Sigmoid colon (tissue), 7 donors: ENCODE measurements at regions of chrX and their contacts with region 1.

Region 1: GRCh38 chrX:129606918-129607317 is 47.8 kb downstream of the APLN start:
- DNase-seq: peak; percentile 72
- H3K4me3 ChIP-seq: no peak overlapping the region
- H3K27ac ChIP-seq: no peak overlapping the region
- H3K4me1 ChIP-seq: peaks cover 0 to 10% (median 2%) of the 10 kb centered on the region in 4 donors
- H3K27me3 ChIP-seq: no peaks in the 10 kb centered on the region
- CTCF ChIP-seq: peak; percentile 57 to 76 (median 70)
- EP300 ChIP-seq: no peak
- POLR2A ChIP-seq: no peak

Region 2: DNA sequence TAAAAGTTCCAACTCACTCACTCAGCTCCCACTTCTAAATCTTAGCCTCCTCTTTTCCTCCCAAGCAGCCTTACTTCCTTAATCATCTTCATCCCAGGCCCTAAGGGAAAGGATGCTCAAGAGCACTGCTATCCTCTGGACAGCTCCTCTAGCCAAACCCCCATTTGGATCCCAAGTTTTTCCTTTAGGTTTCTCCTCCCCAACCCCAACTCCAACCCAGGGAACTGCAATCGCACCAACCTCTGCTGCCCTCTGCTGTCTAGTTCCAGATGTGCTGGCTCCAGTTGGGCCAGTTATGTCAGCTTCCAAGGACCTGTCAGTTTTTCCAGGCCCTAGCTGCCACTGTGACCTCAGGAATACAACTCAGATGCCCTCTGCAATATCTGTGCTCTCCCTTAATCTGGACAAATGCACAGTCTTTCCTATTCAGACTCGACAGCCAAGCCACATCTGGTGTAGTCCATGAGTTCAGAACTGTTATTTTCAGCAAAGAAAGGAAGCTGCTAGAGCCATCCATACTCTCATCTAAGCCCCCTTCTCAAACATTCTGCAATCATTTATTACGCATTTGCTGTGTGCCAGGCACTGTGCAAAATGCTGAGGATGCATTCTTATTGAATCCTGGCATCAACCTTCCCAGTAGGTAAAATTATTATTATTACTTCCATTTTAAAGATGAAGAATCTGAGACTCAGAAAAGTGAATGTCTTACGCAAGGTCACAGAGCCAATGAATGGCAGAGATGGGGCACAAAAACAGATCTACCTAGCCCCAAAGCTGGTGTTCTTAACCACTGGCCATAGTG is 119.6 kb after region 1 on chrX:
- intact Hi-C with region 1: loop called (anchors 1 kb)
- DNase-seq: peak; percentile 74
- H3K4me3 ChIP-seq: no peak overlapping the region
- H3K27ac ChIP-seq: no peak overlapping the region
- H3K4me1 ChIP-seq: no peaks in the 10 kb centered on the region
- H3K27me3 ChIP-seq: no peaks in the 10 kb centered on the region
- CTCF ChIP-seq: peak; percentile 57 to 68 (median 62)
- EP300 ChIP-seq: no peak
- POLR2A ChIP-seq: no peak

Region 3: GRCh38 chrX:129772796-129773431 is 166.0 kb after region 1 on chrX:
- intact Hi-C with region 1: no loop called
- DNase-seq: peak; percentile 78
- H3K4me3 ChIP-seq: no peak overlapping the region
- H3K27ac ChIP-seq: no peak overlapping the region
- H3K4me1 ChIP-seq: no peaks in the 10 kb centered on the region
- H3K27me3 ChIP-seq: no peaks in the 10 kb centered on the region
- CTCF ChIP-seq: no peak
- EP300 ChIP-seq: no peak
- POLR2A ChIP-seq: no peak

Region 4: GRCh38 chrX:130060122-130061069 is 453.5 kb after region 1 on chrX:
- intact Hi-C with region 1: loop called (anchors 10 kb)
- DNase-seq: peak; percentile 86
- H3K4me3 ChIP-seq: peak overlapping the region; percentile 30 to 58 (median 54)
- H3K27ac ChIP-seq: peak overlapping the region; percentile 55 to 76 (median 72)
- H3K4me1 ChIP-seq: peaks cover 0 to 21% (median 7%) of the 10 kb centered on the region in 4 donors
- H3K27me3 ChIP-seq: no peaks in the 10 kb centered on the region
- CTCF ChIP-seq: peak; percentile 67 to 88 (median 75)
- EP300 ChIP-seq: no peak
- POLR2A ChIP-seq: no peak

Region 5: GRCh38 chrX:130196466-130196865 is 589.5 kb after region 1 on chrX:
- intact Hi-C with region 1: loop called (anchors 10 kb)
- DNase-seq: no peak
- H3K4me3 ChIP-seq: no peak overlapping the region
- H3K27ac ChIP-seq: no peak overlapping the region
- H3K4me1 ChIP-seq: no peaks in the 10 kb centered on the region
- H3K27me3 ChIP-seq: no peaks in the 10 kb centered on the region
- CTCF ChIP-seq: no peak
- EP300 ChIP-seq: no peak
- POLR2A ChIP-seq: no peak